ENCODE measurements at regions of chr1 and their contacts with region 1.

Region 1: DNA sequence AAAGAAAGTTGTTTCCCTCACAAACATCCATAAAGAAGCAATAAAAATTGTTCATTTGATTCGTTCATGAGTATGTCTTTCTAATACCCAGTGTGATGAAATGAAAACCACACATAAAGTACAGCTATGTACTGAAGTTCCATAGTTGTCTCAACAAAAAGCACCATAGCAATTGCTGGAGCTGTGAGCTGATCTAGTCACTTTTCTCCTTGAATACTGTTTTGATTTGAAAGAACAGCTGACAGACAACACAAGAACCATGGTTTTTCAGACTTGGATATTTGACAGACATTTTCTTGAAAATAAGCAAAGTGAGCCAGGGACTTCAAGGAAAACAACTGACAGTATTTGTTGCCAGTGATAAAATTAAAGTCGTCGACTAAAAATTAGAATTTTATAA is 237.1 kb upstream of the PLD5 start:
- DNase-seq: no peak
- H3K4me3 ChIP-seq: no peak overlapping the region
- H3K27ac ChIP-seq: no peak overlapping the region
- H3K4me1 ChIP-seq: no peaks in the 10 kb centered on the region
- H3K27me3 ChIP-seq: no peaks in the 10 kb centered on the region
- CTCF ChIP-seq: no peak
- EP300 ChIP-seq: no peak
- POLR2A ChIP-seq: no peak

Region 2: DNA sequence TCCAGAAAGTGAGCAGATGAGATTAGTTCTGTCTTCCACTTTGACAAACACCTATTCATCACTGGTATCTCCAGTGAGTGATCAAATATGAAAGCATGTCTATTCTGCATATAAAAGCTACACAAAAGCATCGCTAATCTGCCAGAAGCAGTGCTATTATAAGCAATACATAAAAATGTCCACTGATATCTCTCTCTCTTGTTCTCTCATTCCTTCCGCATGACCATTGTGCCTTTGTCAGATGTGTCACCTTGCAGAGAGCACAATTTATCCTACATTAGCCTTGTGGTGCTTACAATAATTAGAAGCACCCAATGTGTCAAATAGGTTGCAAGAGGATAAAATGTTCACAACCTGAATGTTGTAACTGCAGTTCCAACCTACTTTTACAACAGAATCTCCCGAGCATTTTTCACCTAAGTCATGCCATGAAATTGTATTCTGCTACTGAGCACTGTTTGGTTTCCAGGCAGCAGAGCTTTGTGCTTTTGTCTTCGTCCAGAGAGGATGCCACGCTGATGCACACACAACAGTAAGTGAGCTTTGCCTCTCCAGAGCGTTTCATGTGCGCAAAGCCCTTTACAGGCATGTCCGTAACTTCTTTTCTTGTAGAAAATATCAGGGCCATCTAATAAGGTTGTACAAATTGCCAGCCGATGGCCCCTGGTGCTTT is 38.4 kb before region 1 on chr1:
- in situ Hi-C with region 1: no loop called
- intact Hi-C with region 1: loop called (anchors 1 kb)
- DNase-seq: no peak
- H3K4me3 ChIP-seq: no peak overlapping the region
- H3K27ac ChIP-seq: no peak overlapping the region
- H3K4me1 ChIP-seq: no peaks in the 10 kb centered on the region
- H3K27me3 ChIP-seq: no peaks in the 10 kb centered on the region
- CTCF ChIP-seq: no peak
- EP300 ChIP-seq: no peak
- POLR2A ChIP-seq: no peak